ENCODE measurements at regions of chr6 and their contacts with region 1.

Region 1: DNA sequence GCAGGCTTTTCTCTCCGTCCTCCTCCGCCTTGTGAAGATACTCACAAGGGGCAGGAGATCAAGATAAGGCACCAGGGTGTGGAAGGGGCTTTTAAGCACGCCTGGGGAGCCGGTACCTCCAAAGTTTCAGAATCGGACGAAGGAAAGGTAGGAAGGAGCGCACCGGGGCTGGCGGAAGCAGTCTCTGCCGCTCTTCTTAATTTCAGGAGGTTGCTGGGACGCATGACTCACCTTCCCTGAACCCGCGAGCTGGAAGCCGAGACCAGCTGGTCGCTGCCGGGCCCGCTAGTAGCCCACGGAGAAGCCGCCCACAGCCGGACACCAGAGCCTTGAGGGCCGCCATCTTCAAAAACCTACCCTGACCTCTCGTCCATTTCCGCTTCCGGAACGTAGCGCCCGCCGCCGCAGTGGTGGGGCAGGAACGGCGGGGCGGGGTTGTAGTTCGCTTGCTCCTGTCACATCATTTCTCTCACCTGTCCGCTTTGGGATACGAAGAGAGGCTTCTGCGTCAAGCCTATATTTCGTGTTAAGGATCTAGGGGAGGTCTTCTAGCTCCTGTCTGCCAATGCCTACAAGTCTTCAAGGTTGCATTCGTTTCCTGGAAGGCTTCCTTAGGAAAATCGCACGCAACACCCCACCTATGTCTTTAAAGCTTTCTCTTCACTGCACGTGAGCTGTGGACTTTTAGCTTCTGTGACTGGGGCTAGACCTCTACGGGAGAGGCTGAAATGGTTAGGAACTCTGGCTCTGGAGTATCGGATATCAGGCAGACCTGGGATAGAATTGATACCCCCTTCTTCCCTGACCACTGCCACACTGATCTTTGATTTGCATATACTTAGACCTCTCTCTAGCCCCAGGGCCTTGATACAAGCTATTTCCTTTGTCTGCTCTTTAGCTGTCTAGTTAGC is at the start of gene MRPS18A:
- DNase-seq: peak; percentile 83
- H3K4me3 Mint-ChIP-seq: peak within 1 kb of the TSS; percentile 90
- H3K27ac Mint-ChIP-seq: peak within 1 kb of the TSS; percentile 92
- H3K4me1 Mint-ChIP-seq: peaks cover 33% of the 10 kb centered on the region
- H3K27me3 Mint-ChIP-seq: no peaks in the 10 kb centered on the region
- CTCF ChIP-seq: no peak
- total RNA-seq, gene MRPS18A: 69.1 and 79.5 TPM in 2 replicates

Region 2: DNA sequence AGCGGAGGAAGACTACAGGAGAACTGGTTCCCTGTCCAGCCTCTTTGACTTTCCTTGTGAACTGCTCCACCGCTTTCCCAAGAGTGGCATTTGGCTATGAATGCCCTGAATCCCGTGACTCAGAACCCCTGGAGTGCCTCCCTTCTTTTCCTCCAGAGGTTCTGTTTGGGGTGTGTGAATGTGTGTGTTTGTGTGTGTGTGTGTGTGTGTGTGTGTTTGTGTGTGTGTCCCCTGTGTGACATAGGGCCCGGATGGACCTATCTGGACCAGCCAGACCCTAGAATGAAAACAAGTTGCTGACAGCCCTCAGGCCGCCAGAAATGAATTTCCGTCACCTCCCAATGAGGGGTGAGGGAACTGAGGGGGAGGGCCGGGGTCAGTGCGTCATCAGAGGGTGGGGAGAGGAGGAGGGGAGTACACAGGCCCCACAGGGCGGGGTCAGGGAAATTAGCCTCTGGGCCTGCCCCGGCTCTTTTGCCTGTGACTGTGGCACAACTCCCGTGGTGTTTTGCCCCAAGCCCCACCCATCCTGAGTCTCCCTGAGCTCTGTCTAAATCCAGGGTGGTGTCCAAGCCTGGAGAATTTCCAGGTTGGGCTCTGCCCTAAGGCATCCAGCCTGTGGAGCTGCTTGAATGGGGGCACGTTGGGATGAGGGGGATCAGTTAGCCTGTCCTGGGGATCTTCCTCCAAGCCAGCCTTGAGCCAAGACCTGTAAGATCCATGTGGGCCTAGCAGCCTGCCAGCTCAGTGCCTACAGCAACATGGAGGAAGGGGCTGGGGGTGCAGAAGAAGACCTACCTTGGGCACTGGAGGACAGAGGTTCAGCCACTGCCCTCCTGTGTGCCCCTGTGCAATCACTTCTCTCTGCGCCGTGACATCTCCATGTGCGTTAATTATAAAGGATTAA is 15.1 kb after region 1 on chr6:
- CTCF ChIA-PET with region 1: interaction called, 4 read pairs
- POLR2A ChIA-PET with region 1: interaction called, 38 read pairs
- intact Hi-C with region 1: no loop called
- DNase-seq: peak; percentile 97
- H3K4me3 Mint-ChIP-seq: peak overlapping the region; percentile 8
- H3K27ac Mint-ChIP-seq: peak overlapping the region; percentile 83
- H3K4me1 Mint-ChIP-seq: peaks cover 26% of the 10 kb centered on the region
- H3K27me3 Mint-ChIP-seq: no peaks in the 10 kb centered on the region
- CTCF ChIP-seq: no peak

Region 3: GRCh38 chr6:43708860-43709653 is 21.4 kb after region 1 on chr6:
- CTCF ChIA-PET with region 1: no interaction called
- POLR2A ChIA-PET with region 1: interaction called, 38 read pairs
- intact Hi-C with region 1: no loop called
- DNase-seq: peak; percentile 88
- H3K4me3 Mint-ChIP-seq: peak overlapping the region; percentile 16
- H3K27ac Mint-ChIP-seq: peak overlapping the region; percentile 82
- H3K4me1 Mint-ChIP-seq: peaks cover 13% of the 10 kb centered on the region
- H3K27me3 Mint-ChIP-seq: peaks cover 20% of the 10 kb centered on the region
- CTCF ChIP-seq: no peak

Region 4: GRCh38 chr6:44190715-44191114 is 503.0 kb after region 1 on chr6:
- CTCF ChIA-PET with region 1: no interaction called
- POLR2A ChIA-PET with region 1: no interaction called
- intact Hi-C with region 1: no loop called
- DNase-seq: no peak
- H3K4me3 Mint-ChIP-seq: no peak overlapping the region
- H3K27ac Mint-ChIP-seq: no peak overlapping the region
- H3K4me1 Mint-ChIP-seq: no peaks in the 10 kb centered on the region
- H3K27me3 Mint-ChIP-seq: peaks cover 8% of the 10 kb centered on the region
- CTCF ChIP-seq: no peak